Aorta (tissue), 5 donors: ENCODE measurements at regions of chr1 and their contacts with region 1.

Region 1: GRCh38 chr1:209747580-209748262 is 8.1 kb upstream of the TRAF3IP3 start:
- DNase-seq: peak; percentile 94
- ATAC-seq: peak; percentile 92
- H3K4me3 ChIP-seq: no peak overlapping the region
- H3K27ac ChIP-seq: no peak overlapping the region
- H3K4me1 ChIP-seq: no peaks in the 10 kb centered on the region
- H3K27me3 ChIP-seq: no peaks in the 10 kb centered on the region

Region 2: GRCh38 chr1:209627732-209628196 is 120.0 kb before region 1 on chr1:
- intact Hi-C with region 1: loop called in 1 of 2 experiments (anchors 5 kb)
- DNase-seq: peak; percentile 85 to 91
- ATAC-seq: peak; percentile 79
- H3K4me3 ChIP-seq: no peak overlapping the region
- H3K27ac ChIP-seq: no peak overlapping the region
- H3K4me1 ChIP-seq: no peaks in the 10 kb centered on the region
- H3K27me3 ChIP-seq: no peaks in the 10 kb centered on the region

Region 3: DNA sequence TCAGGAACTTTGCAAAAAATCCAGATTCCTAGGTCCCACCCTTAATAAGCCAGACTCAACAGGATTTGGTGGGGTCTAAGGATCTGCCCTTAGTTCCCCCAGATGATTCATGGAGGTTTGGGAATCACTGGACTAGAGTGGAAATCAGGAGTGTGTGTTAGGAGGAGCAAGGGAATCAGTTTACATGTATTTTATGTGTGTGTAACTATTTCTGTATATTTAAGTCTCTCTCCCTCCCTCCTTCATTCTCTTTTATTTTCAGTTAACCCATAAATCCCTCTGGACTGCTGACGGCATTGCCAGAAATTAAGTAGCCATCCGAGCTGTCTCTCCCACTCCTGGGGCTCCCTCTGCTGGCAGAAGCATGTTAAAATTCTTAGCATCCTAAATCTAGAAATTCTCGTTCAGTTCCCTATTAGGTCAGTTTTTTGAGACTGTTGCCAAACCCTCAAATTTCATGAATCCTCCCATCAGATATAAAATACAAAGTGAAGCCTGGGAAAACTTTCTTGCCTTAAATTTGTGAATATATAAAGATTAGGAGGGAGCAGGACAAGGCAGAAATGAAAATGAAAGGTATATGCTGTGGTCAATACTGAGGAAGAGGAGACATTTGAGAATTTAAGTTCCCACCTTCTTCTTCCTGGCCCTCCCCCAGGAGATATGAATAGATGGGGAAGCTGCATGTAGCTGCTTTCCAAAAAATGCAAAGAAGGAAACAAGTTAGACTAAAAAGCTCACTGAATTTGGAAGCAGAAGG is 54.8 kb before region 1 on chr1:
- intact Hi-C with region 1: no loop called
- DNase-seq: peak; percentile 79 to 82
- ATAC-seq: peak; percentile 76
- H3K4me3 ChIP-seq: no peak overlapping the region
- H3K27ac ChIP-seq: no peak overlapping the region
- H3K4me1 ChIP-seq: no peaks in the 10 kb centered on the region
- H3K27me3 ChIP-seq: peaks cover 0 to 1% of the 10 kb centered on the region in 2 donors